ENCODE measurements at regions of chr20 and their contacts with region 1.

Region 1: DNA sequence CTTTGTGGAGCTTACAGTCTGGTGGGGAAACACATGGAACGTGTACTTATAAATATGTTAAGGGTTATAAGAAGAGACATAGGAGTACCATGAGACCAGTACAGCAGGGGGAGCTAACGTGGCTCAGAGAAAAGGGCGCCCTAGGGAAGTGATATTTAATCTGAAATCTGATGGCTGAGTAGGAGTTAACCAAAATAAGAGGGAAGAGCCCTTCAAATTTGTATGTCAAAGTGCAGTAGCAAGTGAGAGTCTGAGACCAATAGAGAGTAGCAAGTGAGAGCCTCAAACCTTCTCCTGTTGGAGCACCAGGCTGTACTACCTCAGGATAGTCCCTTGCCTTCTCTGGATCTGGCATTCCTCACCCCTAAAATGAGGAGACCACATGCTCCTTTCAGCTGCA is 6.1 kb upstream of the PKIG start:
- DNase-seq: no peak
- ATAC-seq: no peak

Region 2: DNA sequence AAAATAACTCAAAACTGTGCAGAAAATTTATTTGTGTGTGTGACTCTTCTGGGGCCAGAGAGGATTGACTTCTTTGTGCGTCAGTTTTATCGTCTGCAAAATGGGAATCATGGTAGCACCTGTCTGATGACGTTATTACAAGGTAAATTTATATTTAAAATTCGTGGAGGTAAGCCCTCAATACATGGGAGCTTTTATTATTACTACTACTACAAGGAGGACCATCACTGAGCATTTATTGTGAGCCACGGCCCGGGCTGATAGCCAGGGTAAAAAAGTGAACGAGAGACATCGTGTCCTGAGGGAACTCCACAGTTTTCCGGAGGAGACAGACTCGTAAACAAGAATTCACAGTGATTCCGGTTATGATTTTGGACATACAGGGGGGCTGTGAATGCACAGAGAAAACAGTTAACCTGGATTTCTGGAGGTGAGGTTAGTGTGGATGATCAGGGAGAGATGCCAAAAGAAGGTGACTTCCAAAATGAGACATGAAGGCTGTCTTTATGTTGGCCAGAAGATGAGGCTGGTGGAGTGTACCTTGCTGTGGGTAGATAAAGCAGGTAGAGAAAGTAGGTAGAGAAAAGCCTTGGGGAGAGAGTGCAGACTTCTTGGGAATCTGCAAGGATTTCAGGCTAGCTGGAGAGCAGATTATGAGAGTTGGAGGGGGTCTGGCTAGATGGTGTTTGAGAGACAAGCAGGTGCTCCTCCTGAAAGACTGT is 43.9 kb before region 1 on chr20:
- intact Hi-C with region 1: loop called (anchors 5 kb)
- DNase-seq: no peak
- ATAC-seq: peak; percentile 53